ENCODE measurements at regions of chr17 and their contacts with region 1.

Region 1: DNA sequence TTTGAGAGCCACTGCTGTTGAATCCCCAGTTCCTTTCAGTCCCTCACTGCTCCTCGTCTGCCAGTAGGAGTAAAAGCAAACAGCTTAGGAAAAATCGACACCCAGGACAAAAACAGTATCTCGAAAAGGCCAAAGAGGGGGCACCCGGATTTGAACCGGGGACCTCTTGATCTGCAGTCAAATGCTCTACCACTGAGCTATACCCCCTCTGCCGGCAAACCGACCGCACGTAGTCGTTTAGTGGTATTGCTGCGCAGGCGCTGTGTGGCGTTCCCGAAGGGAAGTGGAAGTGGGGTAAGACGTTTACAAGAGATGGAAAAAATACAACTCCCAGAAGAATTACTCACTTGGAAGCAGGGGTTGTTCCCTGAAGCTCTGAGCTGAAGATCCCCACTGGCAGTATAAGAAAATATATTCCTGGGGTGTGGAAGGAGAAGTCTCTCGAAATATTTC is 2.2 kb upstream of the PLXDC1 start:
- DNase-seq: peak; percentile 95 to 98 (median 97)
- H3K4me3 ChIP-seq: peak overlapping the region; percentile 86 to 90 (median 90)
- H3K27ac ChIP-seq: peak overlapping the region; percentile 94 to 96
- H3K4me1 ChIP-seq: peaks cover 0 to 10% (median 8%) of the 10 kb centered on the region in 3 donors
- H3K27me3 ChIP-seq: no peaks in the 10 kb centered on the region
- CTCF ChIP-seq: no peak

Region 2: GRCh38 chr17:38982858-38983746 is 170.5 kb before region 1 on chr17:
- intact Hi-C with region 1: loop called (anchors 10 kb)
- DNase-seq: peak in 3 of 5 donors; percentile 68 to 91 (median 85)
- H3K4me3 ChIP-seq: no peak overlapping the region
- H3K27ac ChIP-seq: no peak overlapping the region
- H3K4me1 ChIP-seq: no peaks in the 10 kb centered on the region
- H3K27me3 ChIP-seq: no peaks in the 10 kb centered on the region
- CTCF ChIP-seq: peak; percentile 85